ENCODE measurements at regions of chr13 and their contacts with region 1.

Region 1: DNA sequence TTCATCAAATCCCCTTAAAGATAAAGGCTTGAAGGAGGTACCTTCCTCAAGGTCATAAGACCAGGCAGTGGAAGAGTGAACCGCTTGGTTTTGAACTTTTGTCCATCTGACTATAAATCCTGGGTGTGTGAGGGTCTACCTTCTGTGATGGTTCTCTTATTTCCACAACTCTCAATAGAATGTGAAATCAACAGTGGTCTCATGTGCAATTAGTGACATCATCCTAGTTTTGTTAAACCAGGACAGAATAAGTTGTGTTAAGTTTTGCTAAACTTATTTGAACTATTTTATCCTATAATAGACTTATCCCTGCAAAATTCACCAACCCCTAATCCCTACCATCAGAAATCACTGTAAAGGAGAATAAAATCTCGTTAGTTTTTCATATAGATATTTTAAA is 311.3 kb downstream of the DCLK1 start:
- DNase-seq: no peak
- H3K4me3 ChIP-seq: no peak overlapping the region
- H3K27ac ChIP-seq: no peak overlapping the region
- H3K4me1 ChIP-seq: no peaks in the 10 kb centered on the region
- H3K27me3 ChIP-seq: peaks cover 0 to 5% (median 0%) of the 10 kb centered on the region in 5 experiments

Region 2: GRCh38 chr13:35832551-35832950 is 12.6 kb after region 1 on chr13:
- CTCF ChIA-PET with region 1: interaction called, 10 read pairs
- POLR2A ChIA-PET with region 1: no interaction called
- DNase-seq: no peak
- H3K4me3 ChIP-seq: no peak overlapping the region
- H3K27ac ChIP-seq: no peak overlapping the region
- H3K4me1 ChIP-seq: no peaks in the 10 kb centered on the region
- H3K27me3 ChIP-seq: peaks cover 0 to 2% (median 0%) of the 10 kb centered on the region in 5 experiments

Region 3: GRCh38 chr13:35920816-35921215 is 100.9 kb after region 1 on chr13:
- CTCF ChIA-PET with region 1: no interaction called
- POLR2A ChIA-PET with region 1: no interaction called
- DNase-seq: no peak
- H3K4me3 ChIP-seq: no peak overlapping the region
- H3K27ac ChIP-seq: no peak overlapping the region
- H3K4me1 ChIP-seq: no peaks in the 10 kb centered on the region
- H3K27me3 ChIP-seq: peaks cover 0 to 5% (median 0%) of the 10 kb centered on the region in 5 experiments

Measured in common myeloid progenitor, CD34-positive (primary cell).